Heart left ventricle (tissue), 16 donors: ENCODE measurements at regions of chr19 and their contacts with region 1.

Region 1: DNA sequence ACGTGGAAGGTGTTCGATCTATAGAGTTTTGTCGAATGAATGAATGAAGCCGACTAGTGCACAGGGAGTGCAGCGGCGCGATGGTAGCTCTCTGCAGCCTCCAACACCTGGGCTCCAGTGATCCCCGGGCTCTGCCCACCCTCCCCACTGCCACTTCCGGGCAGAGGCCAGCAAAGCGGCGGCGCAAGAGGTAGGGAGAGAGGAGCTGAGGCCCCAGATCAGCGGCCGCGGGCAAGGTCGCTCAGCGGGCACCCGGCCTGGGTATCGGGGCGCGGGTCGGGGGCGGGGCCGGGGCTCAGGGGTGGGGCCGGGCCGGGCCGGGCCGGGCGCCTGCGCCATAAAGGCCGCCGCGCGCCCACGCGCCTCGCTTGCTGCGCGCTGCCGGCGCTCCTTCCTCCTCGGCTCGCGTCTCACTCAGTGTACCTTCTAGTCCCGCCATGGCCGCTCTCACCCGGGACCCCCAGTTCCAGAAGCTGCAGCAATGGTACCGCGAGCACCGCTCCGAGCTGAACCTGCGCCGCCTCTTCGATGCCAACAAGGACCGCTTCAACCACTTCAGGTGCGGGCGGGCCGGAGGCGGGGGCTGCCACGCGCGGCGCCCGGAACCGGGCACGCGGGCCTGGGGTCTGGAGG is at the start of gene GPI:
- DNase-seq: peak; percentile 63 to 84 (median 75)
- ATAC-seq: peak; percentile 28 to 88 (median 76)
- H3K4me3 ChIP-seq: peak within 1 kb of the TSS; percentile 85 to 99 (median 94)
- H3K27ac ChIP-seq: peak within 1 kb of the TSS; percentile 80 to 97 (median 92)
- H3K4me1 ChIP-seq: peaks cover 14 to 48% (median 31%) of the 10 kb centered on the region in 12 donors
- H3K27me3 ChIP-seq: no peaks in the 10 kb centered on the region
- CTCF ChIP-seq: no peak
- POLR2A ChIP-seq: peak in 1 of 2 donors; percentile 54
- total RNA-seq, gene GPI: 359 to 764 (median 549) TPM

Region 2: GRCh38 chr19:34501339-34502320 is 136.7 kb after region 1 on chr19:
- intact Hi-C with region 1: loop called in 1 of 10 experiments (anchors 5 kb)
- DNase-seq: peak; percentile 90 to 96 (median 94)
- ATAC-seq: peak; percentile 83 to 90 (median 86)
- H3K4me3 ChIP-seq: peak overlapping the region in 1 of 12 donors; percentile 11
- H3K27ac ChIP-seq: peak overlapping the region in 6 of 12 donors; percentile 3 to 56 (median 26)
- H3K4me1 ChIP-seq: peaks cover 0 to 39% (median 10%) of the 10 kb centered on the region in 12 donors
- H3K27me3 ChIP-seq: peaks cover 0 to 5% (median 0%) of the 10 kb centered on the region in 9 donors
- CTCF ChIP-seq: peak; percentile 98 to 99 (median 99)
- POLR2A ChIP-seq: no peak